CD8-positive, alpha-beta T cell (primary cell): ENCODE measurements at regions of chr10 and their contacts with region 1.

Region 1: GRCh38 chr10:1240341-1240775 is 184.2 kb downstream of the WDR37 start:
- DNase-seq: peak in 2 of 9 experiments; percentile 48 to 69
- ATAC-seq: peak; percentile 88
- H3K4me3 ChIP-seq: peak overlapping the region in 1 of 2 experiments; percentile 57
- H3K4me3 Mint-ChIP-seq: peak overlapping the region; percentile 83
- H3K27ac ChIP-seq: no peak overlapping the region
- H3K27ac Mint-ChIP-seq: peak overlapping the region; percentile 96
- H3K4me1 ChIP-seq: peaks cover 15% of the 10 kb centered on the region
- H3K4me1 Mint-ChIP-seq: peaks cover 16% of the 10 kb centered on the region
- H3K27me3 ChIP-seq: peaks cover 0 to 3% of the 10 kb centered on the region in 2 experiments
- H3K27me3 Mint-ChIP-seq: peaks cover 6% of the 10 kb centered on the region
- CTCF ChIP-seq: no peak

Region 2: DNA sequence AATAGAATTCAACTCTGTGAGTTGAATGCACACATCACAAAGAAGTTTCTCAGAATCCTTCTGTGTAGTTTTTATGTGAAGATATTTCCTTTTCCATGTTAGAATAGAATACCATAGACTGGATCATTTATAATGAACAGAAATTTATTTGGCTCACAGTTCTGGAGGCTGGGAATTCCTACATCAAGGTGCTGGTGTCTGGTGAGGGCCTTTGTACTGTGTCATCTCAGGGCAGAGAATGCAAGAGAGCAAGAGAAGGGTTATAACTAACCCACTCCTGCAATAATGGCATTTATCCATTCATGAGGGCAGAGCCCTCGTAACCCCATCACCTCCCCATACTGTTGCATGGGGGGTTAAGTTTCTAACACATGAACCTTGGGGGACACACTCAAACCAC is 532.5 kb before region 1 on chr10:
- CTCF ChIA-PET with region 1: no interaction called
- POLR2A ChIA-PET with region 1: no interaction called
- intact Hi-C with region 1: no loop called
- DNase-seq: no peak
- ATAC-seq: no peak
- H3K4me3 ChIP-seq: no peak overlapping the region
- H3K4me3 Mint-ChIP-seq: no peak overlapping the region
- H3K27ac ChIP-seq: no peak overlapping the region
- H3K27ac Mint-ChIP-seq: no peak overlapping the region
- H3K4me1 ChIP-seq: no peaks in the 10 kb centered on the region
- H3K4me1 Mint-ChIP-seq: no peaks in the 10 kb centered on the region
- H3K27me3 ChIP-seq: no peaks in the 10 kb centered on the region
- H3K27me3 Mint-ChIP-seq: peaks cover 21% of the 10 kb centered on the region
- CTCF ChIP-seq: no peak

Region 3: GRCh38 chr10:1159131-1160061 is 81.0 kb before region 1 on chr10:
- CTCF ChIA-PET with region 1: no interaction called
- POLR2A ChIA-PET with region 1: no interaction called
- intact Hi-C with region 1: loop called in 1 of 2 experiments (anchors 5 kb)
- DNase-seq: peak in 3 of 9 experiments; percentile 17 to 80 (median 40)
- ATAC-seq: peak; percentile 67
- H3K4me3 ChIP-seq: peak overlapping the region in 1 of 2 experiments; percentile 28
- H3K4me3 Mint-ChIP-seq: peak overlapping the region; percentile 8
- H3K27ac ChIP-seq: peak overlapping the region in 1 of 2 experiments; percentile 74
- H3K27ac Mint-ChIP-seq: peak overlapping the region; percentile 32
- H3K4me1 ChIP-seq: no peaks in the 10 kb centered on the region
- H3K4me1 Mint-ChIP-seq: no peaks in the 10 kb centered on the region
- H3K27me3 ChIP-seq: no peaks in the 10 kb centered on the region
- H3K27me3 Mint-ChIP-seq: no peaks in the 10 kb centered on the region
- CTCF ChIP-seq: no peak